ENCODE measurements at regions of chr9 and their contacts with region 1.

Region 1: GRCh38 chr9:9412241-9412640 is 1200.6 kb downstream of the PTPRD start:
- DNase-seq: no peak
- ATAC-seq: no peak
- H3K4me3 ChIP-seq: no peak overlapping the region
- H3K27ac ChIP-seq: no peak overlapping the region
- H3K4me1 ChIP-seq: no peaks in the 10 kb centered on the region
- H3K27me3 ChIP-seq: no peaks in the 10 kb centered on the region

Region 2: DNA sequence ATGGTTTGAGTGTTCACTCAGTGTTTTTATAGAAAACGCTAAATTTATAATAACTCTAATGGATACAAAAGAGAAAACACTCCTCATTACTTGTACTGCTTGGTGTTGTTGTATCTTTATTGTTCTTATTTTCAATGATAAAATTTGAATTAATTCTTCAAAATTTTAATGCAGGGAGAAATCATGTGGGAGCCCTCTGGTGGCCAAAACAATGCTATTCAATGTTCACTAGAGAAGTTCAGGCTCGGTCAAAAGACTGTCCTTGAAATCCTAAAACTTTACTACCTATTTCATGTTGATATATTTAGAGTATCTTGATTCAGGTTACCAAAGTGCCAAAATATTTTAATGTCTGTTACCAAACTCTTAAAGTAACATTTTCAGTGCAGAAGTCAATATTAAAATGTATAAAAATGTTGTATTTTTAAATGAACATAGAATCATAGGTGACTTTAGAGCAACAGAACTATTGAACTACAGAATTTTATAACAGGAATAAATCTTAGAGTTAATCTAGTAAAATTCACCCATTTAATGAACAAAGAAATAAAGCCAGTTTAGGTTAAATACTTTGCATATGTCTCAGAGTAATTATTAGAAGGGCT is 59.3 kb before region 1 on chr9:
- intact Hi-C with region 1: no loop called
- DNase-seq: no peak
- ATAC-seq: no peak
- H3K4me3 ChIP-seq: no peak overlapping the region
- H3K27ac ChIP-seq: no peak overlapping the region
- H3K4me1 ChIP-seq: no peaks in the 10 kb centered on the region
- H3K27me3 ChIP-seq: no peaks in the 10 kb centered on the region

Region 3: GRCh38 chr9:10411272-10411671 is 999.0 kb after region 1 on chr9:
- intact Hi-C with region 1: loop called in 1 of 4 experiments (anchors 5 kb)
- DNase-seq: no peak
- ATAC-seq: no peak
- H3K4me3 ChIP-seq: no peak overlapping the region
- H3K27ac ChIP-seq: no peak overlapping the region
- H3K4me1 ChIP-seq: no peaks in the 10 kb centered on the region
- H3K27me3 ChIP-seq: no peaks in the 10 kb centered on the region